Activated CD4-positive, alpha-beta T cell treated with anti-CD3 and anti-CD28 coated beads, Interleukin-2, amount 10 ng/mL, durations not matched to agents 24 days and 14 days (primary cell): ENCODE measurements at regions of chr19 and their contacts with region 1.

Region 1: DNA sequence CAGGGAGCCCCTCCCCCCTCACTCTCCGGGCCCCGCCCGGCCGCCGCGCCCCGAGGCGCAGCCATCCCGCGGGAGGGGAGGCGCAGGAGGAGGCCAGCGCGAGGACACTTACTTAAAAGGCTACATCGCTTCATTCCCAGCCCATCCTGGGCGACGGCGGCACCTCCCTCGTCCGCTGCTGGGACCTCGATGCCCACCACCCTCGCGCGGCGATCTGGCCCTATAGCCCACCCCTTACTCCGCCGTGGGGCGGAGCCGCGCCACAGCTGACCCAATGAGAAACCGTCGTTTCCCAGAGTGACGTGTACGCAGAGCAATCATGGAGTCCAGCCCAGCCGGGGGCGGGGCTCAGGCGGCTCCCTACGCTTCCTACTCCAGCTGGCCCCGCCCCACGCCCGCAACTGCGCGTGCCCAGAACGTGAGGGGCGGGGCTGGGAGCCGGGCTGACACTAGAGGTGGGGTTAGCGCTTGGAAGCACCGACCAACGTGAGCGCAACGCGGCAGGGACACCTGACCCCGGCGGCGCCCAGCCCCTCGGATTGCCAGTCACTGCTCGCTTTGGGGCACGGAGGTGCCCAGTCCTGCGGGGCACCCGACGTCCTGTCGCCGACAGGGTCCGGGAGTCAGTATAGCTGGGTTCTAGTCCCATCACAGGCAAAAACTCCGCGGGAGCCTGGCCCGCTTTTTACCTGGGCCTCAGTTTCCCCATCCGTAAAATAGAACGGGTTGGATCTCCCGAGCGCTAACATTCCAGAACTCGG is at the start of gene ANKRD27:
- DNase-seq: peak; percentile 100
- H3K4me3 Mint-ChIP-seq: peak within 1 kb of the TSS; percentile 95
- H3K27ac Mint-ChIP-seq: peak within 1 kb of the TSS; percentile 88
- H3K4me1 Mint-ChIP-seq: peaks cover 24% of the 10 kb centered on the region
- H3K27me3 Mint-ChIP-seq: peaks cover 28% of the 10 kb centered on the region
- total RNA-seq, gene ANKRD27: 34.2 and 35.1 TPM in 2 replicates

Region 2: DNA sequence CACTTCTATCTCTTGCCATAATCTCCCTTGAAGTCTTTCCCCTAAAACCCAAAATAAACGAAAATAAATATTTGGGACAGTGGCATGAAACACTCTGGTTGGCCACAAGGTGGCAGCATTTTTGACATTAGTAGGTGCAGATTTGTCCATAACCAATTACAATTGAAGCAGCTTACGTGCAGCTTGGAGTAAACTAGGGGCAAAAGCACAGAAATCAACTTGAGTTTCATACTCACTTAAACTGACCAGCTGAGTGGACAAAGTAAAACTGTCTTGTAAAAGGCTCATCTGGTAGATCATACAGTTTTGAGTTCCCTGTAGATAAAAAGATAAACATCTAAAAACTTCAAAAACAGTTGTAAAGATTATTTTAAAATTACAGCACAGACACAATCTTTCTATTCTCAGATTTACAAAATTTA is 75.4 kb before region 1 on chr19:
- intact Hi-C with region 1: loop called (anchors 2 kb)
- DNase-seq: peak; percentile 81
- H3K4me3 Mint-ChIP-seq: no peak overlapping the region
- H3K27ac Mint-ChIP-seq: peak overlapping the region; percentile 60
- H3K4me1 Mint-ChIP-seq: peaks cover 6% of the 10 kb centered on the region
- H3K27me3 Mint-ChIP-seq: no peaks in the 10 kb centered on the region

Region 3: GRCh38 chr19:32971715-32972540 is 296.8 kb after region 1 on chr19 and contains the starts of genes CEP89 and FAAP24:
- intact Hi-C with region 1: loop called (anchors 5 kb)
- DNase-seq: peak; percentile 100
- H3K4me3 Mint-ChIP-seq: peak within 1 kb of the TSS; percentile 100
- H3K27ac Mint-ChIP-seq: peak within 1 kb of the TSS; percentile 95
- H3K4me1 Mint-ChIP-seq: peaks cover 19% of the 10 kb centered on the region
- H3K27me3 Mint-ChIP-seq: no peaks in the 10 kb centered on the region
- total RNA-seq, gene CEP89: 16.9 and 17.6 TPM in 2 replicates
- total RNA-seq, gene FAAP24: 10.0 and 10.1 TPM in 2 replicates

Region 4: GRCh38 chr19:33373701-33374421 is 698.7 kb after region 1 on chr19 and contains the start of gene CEBPG:
- intact Hi-C with region 1: loop called (anchors 10 kb)
- DNase-seq: peak; percentile 88
- H3K4me3 Mint-ChIP-seq: peak within 1 kb of the TSS; percentile 94
- H3K27ac Mint-ChIP-seq: peak within 1 kb of the TSS; percentile 80
- H3K4me1 Mint-ChIP-seq: peaks cover 39% of the 10 kb centered on the region
- H3K27me3 Mint-ChIP-seq: no peaks in the 10 kb centered on the region
- total RNA-seq, gene CEBPG: 29.7 and 29.8 TPM in 2 replicates